Colonic mucosa (tissue), 4 donors: ENCODE measurements at regions of chr9 and their contacts with region 1.

Region 1: GRCh38 chr9:8895861-8896224 is 1096.3 kb upstream of the DMAC1 start:
- DNase-seq: no peak
- H3K4me3 ChIP-seq: no peak overlapping the region
- H3K27ac ChIP-seq: no peak overlapping the region
- H3K4me1 ChIP-seq: no peaks in the 10 kb centered on the region
- H3K27me3 ChIP-seq: no peaks in the 10 kb centered on the region
- CTCF ChIP-seq: peak; percentile 35

Region 2: DNA sequence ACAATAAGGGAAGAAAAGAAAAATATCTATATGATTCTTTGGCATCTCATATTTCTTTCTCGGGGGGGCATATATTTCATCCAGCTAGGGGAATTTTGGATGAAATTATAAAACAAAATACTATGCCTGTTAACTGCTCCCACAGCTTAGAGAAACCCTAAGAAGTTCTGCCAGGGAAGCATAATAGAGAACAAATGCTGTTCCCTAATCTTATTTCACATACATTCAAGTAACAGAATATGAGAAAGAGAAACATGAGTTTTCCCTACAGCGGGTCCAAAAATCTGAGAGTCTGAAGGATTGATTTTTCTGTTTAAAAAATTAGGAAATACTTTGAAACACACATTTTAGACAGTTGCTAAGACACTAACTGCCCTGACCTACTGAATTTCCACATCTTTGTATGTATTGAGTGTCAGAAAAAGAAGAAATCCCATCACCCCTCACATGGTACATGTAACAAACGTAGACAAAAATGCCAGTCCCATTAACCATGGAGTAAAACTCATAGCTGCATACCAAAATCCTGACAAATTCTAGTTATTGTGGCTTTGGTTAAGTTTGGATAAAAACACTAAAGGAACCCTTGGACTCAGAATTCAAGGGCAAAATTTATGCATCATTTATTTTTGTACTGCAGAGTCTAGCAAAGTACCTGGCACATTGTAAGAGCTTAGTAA is 476.1 kb before region 1 on chr9:
- intact Hi-C with region 1: no loop called
- DNase-seq: no peak
- H3K4me3 ChIP-seq: no peak overlapping the region
- H3K27ac ChIP-seq: no peak overlapping the region
- H3K4me1 ChIP-seq: no peaks in the 10 kb centered on the region
- H3K27me3 ChIP-seq: no peaks in the 10 kb centered on the region
- CTCF ChIP-seq: no peak

Region 3: GRCh38 chr9:8486095-8486494 is 409.7 kb before region 1 on chr9:
- intact Hi-C with region 1: loop called (anchors 5 kb)
- DNase-seq: peak; percentile 45
- H3K4me3 ChIP-seq: no peak overlapping the region
- H3K27ac ChIP-seq: no peak overlapping the region
- H3K4me1 ChIP-seq: no peaks in the 10 kb centered on the region
- H3K27me3 ChIP-seq: no peaks in the 10 kb centered on the region
- CTCF ChIP-seq: peak; percentile 18